Activated CD4-positive, alpha-beta memory T cell treated with anti-CD3 and anti-CD28 coated beads for 36 hours (primary cell): ENCODE measurements at regions of chr1 and their contacts with region 1.

Region 1: GRCh38 chr1:101081496-101082488 is 56.2 kb upstream of the DPH5 start:
- DNase-seq: peak; percentile 62
- H3K4me3 Mint-ChIP-seq: no peak overlapping the region
- H3K27ac Mint-ChIP-seq: no peak overlapping the region
- H3K4me1 Mint-ChIP-seq: peaks cover 34% of the 10 kb centered on the region
- H3K27me3 Mint-ChIP-seq: no peaks in the 10 kb centered on the region

Region 2: DNA sequence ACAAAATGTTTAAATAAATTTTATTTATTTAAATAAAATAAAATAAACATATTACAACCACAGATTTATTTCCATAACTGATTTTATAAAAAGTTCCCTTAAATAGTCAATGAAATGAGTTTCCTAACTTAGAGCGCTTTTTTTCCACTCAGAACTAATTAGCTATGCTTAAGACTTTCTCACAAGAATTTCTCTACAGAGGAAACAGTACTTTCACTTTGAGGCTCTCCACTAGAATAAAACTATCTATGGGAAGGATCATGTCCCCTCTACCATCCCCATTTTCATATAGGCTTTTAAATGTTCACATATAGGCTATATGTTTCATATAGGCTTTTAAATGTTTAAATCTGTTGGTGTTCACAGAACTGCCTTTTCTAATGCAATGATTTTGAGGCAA is 16.2 kb before region 1 on chr1:
- CTCF ChIA-PET with region 1: no interaction called
- POLR2A ChIA-PET with region 1: interaction called, 3 read pairs
- intact Hi-C with region 1: loop called (anchors 2 kb)
- DNase-seq: no peak
- H3K4me3 Mint-ChIP-seq: no peak overlapping the region
- H3K27ac Mint-ChIP-seq: no peak overlapping the region
- H3K4me1 Mint-ChIP-seq: peaks cover 42% of the 10 kb centered on the region
- H3K27me3 Mint-ChIP-seq: no peaks in the 10 kb centered on the region

Region 3: DNA sequence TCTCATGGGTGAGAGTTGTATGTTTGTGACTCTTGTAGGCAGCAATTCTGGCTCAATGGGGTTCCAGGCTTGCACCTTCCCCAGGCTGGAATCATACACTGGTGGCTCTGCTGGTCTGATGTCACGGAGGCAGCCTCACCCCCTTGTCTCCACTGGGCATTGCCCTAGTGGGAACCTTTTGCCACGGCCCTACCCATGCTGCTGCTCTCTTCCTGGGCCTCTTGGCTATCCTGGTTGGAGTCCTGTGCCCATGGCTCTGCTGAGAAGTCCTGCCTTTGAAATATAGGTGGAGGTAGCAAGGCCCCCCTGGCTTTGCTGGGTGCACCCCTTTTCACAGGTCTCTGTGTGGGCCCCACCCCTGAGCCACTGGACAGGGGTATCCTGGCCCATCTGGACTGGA is 13.8 kb after region 1 on chr1:
- CTCF ChIA-PET with region 1: no interaction called
- POLR2A ChIA-PET with region 1: no interaction called
- intact Hi-C with region 1: no loop called
- DNase-seq: no peak
- H3K4me3 Mint-ChIP-seq: no peak overlapping the region
- H3K27ac Mint-ChIP-seq: no peak overlapping the region
- H3K4me1 Mint-ChIP-seq: no peaks in the 10 kb centered on the region
- H3K27me3 Mint-ChIP-seq: no peaks in the 10 kb centered on the region

Region 4: GRCh38 chr1:101181930-101182329 is 100.1 kb after region 1 on chr1:
- CTCF ChIA-PET with region 1: no interaction called
- POLR2A ChIA-PET with region 1: no interaction called
- intact Hi-C with region 1: no loop called
- DNase-seq: no peak
- H3K4me3 Mint-ChIP-seq: no peak overlapping the region
- H3K27ac Mint-ChIP-seq: peak overlapping the region; percentile 68
- H3K4me1 Mint-ChIP-seq: peaks cover 74% of the 10 kb centered on the region
- H3K27me3 Mint-ChIP-seq: no peaks in the 10 kb centered on the region